A673 (cell line): ENCODE measurements at regions of chr17 and their contacts with region 1.

Region 1: GRCh38 chr17:74379495-74380085 is 12.3 kb downstream of the GPR142 start:
- DNase-seq: peak; percentile 87
- H3K4me3 ChIP-seq: peak overlapping the region; percentile 9
- H3K27ac ChIP-seq: peak overlapping the region; percentile 13
- H3K4me1 ChIP-seq: peaks cover 23% of the 10 kb centered on the region
- H3K27me3 ChIP-seq: no peaks in the 10 kb centered on the region
- CTCF ChIP-seq: peak; percentile 92

Region 2: DNA sequence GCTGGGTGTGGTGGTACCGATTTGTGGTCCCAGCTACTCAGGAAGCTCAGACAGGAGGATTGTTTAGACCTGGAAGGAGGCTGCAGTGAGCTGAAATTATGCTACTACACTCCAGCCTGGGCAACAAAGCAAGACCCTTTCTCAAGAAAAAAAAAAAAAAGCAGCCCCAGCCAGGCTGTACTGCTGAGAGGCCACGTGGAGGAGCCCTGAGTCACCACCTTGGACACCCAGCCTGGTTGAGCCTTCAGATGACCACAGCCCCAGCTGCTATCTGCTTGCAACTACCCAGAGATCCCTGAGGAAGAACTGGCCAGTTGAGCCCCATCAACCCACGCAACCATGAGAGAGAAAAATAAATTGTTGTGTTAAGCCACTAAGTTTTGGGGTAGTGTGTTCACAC is 28.7 kb after region 1 on chr17:
- CTCF ChIA-PET with region 1: interaction called, 15 read pairs
- POLR2A ChIA-PET with region 1: no interaction called
- intact Hi-C with region 1: no loop called
- DNase-seq: no peak
- H3K4me3 ChIP-seq: no peak overlapping the region
- H3K27ac ChIP-seq: no peak overlapping the region
- H3K4me1 ChIP-seq: no peaks in the 10 kb centered on the region
- H3K27me3 ChIP-seq: no peaks in the 10 kb centered on the region
- CTCF ChIP-seq: no peak

Region 3: GRCh38 chr17:74457146-74457819 is 77.7 kb after region 1 on chr17:
- CTCF ChIA-PET with region 1: interaction called, 17 read pairs
- POLR2A ChIA-PET with region 1: no interaction called
- intact Hi-C with region 1: loop called (anchors 1 kb)
- DNase-seq: peak; percentile 81
- H3K4me3 ChIP-seq: no peak overlapping the region
- H3K27ac ChIP-seq: no peak overlapping the region
- H3K4me1 ChIP-seq: peaks cover 37% of the 10 kb centered on the region
- H3K27me3 ChIP-seq: no peaks in the 10 kb centered on the region
- CTCF ChIP-seq: peak; percentile 97

Region 4: DNA sequence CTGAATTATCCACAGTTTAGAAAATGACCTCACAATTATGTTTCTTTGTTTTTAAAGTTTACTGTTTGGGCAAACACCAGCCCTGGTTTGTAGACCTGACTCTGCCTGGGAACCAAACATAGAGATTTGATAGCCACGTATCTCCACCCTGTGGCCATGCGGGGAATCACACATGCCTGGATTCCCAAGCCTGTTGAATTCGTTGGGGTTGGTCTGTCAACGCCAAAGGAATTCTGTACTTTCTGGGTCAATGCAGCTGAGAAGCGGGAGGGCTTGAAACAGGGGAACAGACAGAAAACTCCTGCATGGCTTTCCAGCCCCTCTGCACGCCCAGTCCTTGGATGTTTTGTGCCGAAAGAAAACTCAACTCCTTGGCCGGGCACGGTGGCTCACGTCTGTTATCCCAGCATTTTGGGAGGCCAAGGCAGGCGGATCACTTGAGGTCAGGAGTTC is 113.8 kb after region 1 on chr17:
- CTCF ChIA-PET with region 1: no interaction called
- POLR2A ChIA-PET with region 1: no interaction called
- intact Hi-C with region 1: loop called (anchors 1 kb)
- DNase-seq: peak; percentile 70
- H3K4me3 ChIP-seq: no peak overlapping the region
- H3K27ac ChIP-seq: no peak overlapping the region
- H3K4me1 ChIP-seq: no peaks in the 10 kb centered on the region
- H3K27me3 ChIP-seq: peaks cover 11% of the 10 kb centered on the region
- CTCF ChIP-seq: peak; percentile 85

Region 5: GRCh38 chr17:74513987-74514631 is 134.5 kb after region 1 on chr17:
- CTCF ChIA-PET with region 1: no interaction called
- POLR2A ChIA-PET with region 1: no interaction called
- intact Hi-C with region 1: no loop called
- DNase-seq: peak; percentile 52
- H3K4me3 ChIP-seq: no peak overlapping the region
- H3K27ac ChIP-seq: no peak overlapping the region
- H3K4me1 ChIP-seq: no peaks in the 10 kb centered on the region
- H3K27me3 ChIP-seq: no peaks in the 10 kb centered on the region
- CTCF ChIP-seq: no peak